ENCODE measurements at regions of chrX and their contacts with region 1.

Region 1: GRCh38 chrX:17590892-17591740 is 146.2 kb upstream of the SCML1 start:
- DNase-seq: peak in 3 of 9 donors; percentile 0 to 21 (median 12)
- ATAC-seq: peak; percentile 40
- H3K4me3 ChIP-seq: no peak overlapping the region
- H3K4me3 Mint-ChIP-seq: peak overlapping the region in 1 of 10 donors; percentile 3
- H3K27ac ChIP-seq: no peak overlapping the region
- H3K27ac Mint-ChIP-seq: no peak overlapping the region
- H3K4me1 ChIP-seq: no peaks in the 10 kb centered on the region
- H3K4me1 Mint-ChIP-seq: peaks cover 0 to 18% (median 2%) of the 10 kb centered on the region in 7 donors
- H3K27me3 ChIP-seq: no peaks in the 10 kb centered on the region
- H3K27me3 Mint-ChIP-seq: peaks cover 0 to 3% (median 0%) of the 10 kb centered on the region in 5 donors

Region 2: GRCh38 chrX:16290997-16291396 is 1300.1 kb before region 1 on chrX:
- CTCF ChIA-PET with region 1: no interaction called
- POLR2A ChIA-PET with region 1: no interaction called
- intact Hi-C with region 1: no loop called
- DNase-seq: no peak
- ATAC-seq: no peak
- H3K4me3 ChIP-seq: no peak overlapping the region
- H3K4me3 Mint-ChIP-seq: no peak overlapping the region
- H3K27ac ChIP-seq: no peak overlapping the region
- H3K27ac Mint-ChIP-seq: no peak overlapping the region
- H3K4me1 ChIP-seq: no peaks in the 10 kb centered on the region
- H3K4me1 Mint-ChIP-seq: no peaks in the 10 kb centered on the region
- H3K27me3 ChIP-seq: no peaks in the 10 kb centered on the region
- H3K27me3 Mint-ChIP-seq: peaks cover 0 to 16% (median 6%) of the 10 kb centered on the region in 5 donors

Region 3: GRCh38 chrX:17535229-17535628 is 55.9 kb before region 1 on chrX:
- CTCF ChIA-PET with region 1: no interaction called
- POLR2A ChIA-PET with region 1: no interaction called
- intact Hi-C with region 1: loop called in 1 of 2 experiments (anchors 5 kb)
- DNase-seq: peak in 5 of 9 donors; percentile 3 to 34 (median 4)
- ATAC-seq: peak; percentile 52
- H3K4me3 ChIP-seq: no peak overlapping the region
- H3K4me3 Mint-ChIP-seq: no peak overlapping the region
- H3K27ac ChIP-seq: no peak overlapping the region
- H3K27ac Mint-ChIP-seq: no peak overlapping the region
- H3K4me1 ChIP-seq: no peaks in the 10 kb centered on the region
- H3K4me1 Mint-ChIP-seq: peaks cover 0 to 2% (median 0%) of the 10 kb centered on the region in 7 donors
- H3K27me3 ChIP-seq: no peaks in the 10 kb centered on the region
- H3K27me3 Mint-ChIP-seq: no peaks in the 10 kb centered on the region